T-cell (primary cell): ENCODE measurements at regions of chr12 and their contacts with region 1.

Region 1: DNA sequence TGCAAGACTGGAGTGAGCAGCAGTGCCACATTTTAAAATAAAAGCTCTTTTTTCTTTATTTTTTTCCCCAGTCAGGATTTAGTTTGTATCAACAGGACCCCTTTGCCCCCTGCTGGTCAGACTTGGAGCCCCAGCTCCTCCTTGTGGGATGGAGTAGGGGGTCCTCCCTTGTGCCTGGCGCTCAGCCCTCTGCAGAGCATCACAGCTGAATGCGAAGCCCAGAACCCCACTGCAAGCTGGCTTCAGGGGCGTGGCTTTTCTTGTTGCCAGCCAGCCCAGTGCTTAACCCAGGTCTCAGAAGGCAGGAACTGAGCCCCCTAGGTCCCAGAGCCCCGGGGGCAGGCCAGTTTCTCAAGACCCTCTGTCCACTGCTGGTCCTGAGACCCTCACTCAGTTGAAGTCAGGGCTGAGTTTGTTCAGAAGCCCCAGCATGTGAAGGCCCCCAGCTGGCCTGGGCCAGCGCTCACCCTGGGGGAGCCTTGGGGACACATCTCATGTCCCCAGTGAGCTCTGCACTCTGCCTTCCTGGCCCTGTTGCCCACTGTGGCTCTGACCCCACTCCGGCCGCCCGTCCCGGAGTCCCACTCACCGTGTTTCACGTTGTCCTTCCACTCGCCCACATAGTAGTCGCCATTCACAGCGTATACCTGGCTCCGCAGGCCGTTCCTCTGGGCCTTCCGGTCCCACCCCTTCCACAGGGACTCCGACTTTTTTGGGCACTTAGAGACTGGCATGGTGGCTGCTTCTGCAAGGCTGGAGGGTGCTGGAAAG is 519 bp downstream of the MORN3 start:
- DNase-seq: peak in 32 of 35 experiments; percentile 20 to 75 (median 57)
- ATAC-seq: no peak
- H3K4me3 ChIP-seq: no peak overlapping the region
- H3K4me3 Mint-ChIP-seq: no peak overlapping the region
- H3K27ac ChIP-seq: no peak overlapping the region
- H3K27ac Mint-ChIP-seq: peak overlapping the region; percentile 80 to 82
- H3K4me1 ChIP-seq: peaks cover 29 to 84% of the 10 kb centered on the region in 2 experiments
- H3K4me1 Mint-ChIP-seq: peaks cover 58 to 70% (median 61%) of the 10 kb centered on the region in 3 donors
- H3K27me3 ChIP-seq: no peaks in the 10 kb centered on the region
- H3K27me3 Mint-ChIP-seq: no peaks in the 10 kb centered on the region

Region 2: GRCh38 chr12:121530600-121531355 is 138.2 kb before region 1 on chr12:
- CTCF ChIA-PET with region 1: no interaction called
- POLR2A ChIA-PET with region 1: interaction called in 1 of 2 experiments, 11 read pairs
- DNase-seq: peak; percentile 47 to 86 (median 76)
- ATAC-seq: peak; percentile 62 to 85 (median 84)
- H3K4me3 ChIP-seq: no peak overlapping the region
- H3K4me3 Mint-ChIP-seq: peak overlapping the region; percentile 13 to 59 (median 35)
- H3K27ac ChIP-seq: peak overlapping the region; percentile 69
- H3K27ac Mint-ChIP-seq: peak overlapping the region; percentile 91 to 95
- H3K4me1 ChIP-seq: peaks cover 7 to 47% of the 10 kb centered on the region in 2 experiments
- H3K4me1 Mint-ChIP-seq: peaks cover 41 to 53% (median 51%) of the 10 kb centered on the region in 3 donors
- H3K27me3 ChIP-seq: no peaks in the 10 kb centered on the region
- H3K27me3 Mint-ChIP-seq: no peaks in the 10 kb centered on the region

Region 3: GRCh38 chr12:121579981-121580868 is 88.7 kb before region 1 on chr12:
- CTCF ChIA-PET with region 1: interaction called, 6 to 13 read pairs
- POLR2A ChIA-PET with region 1: interaction called, 3 to 5 read pairs
- DNase-seq: peak; percentile 59 to 88 (median 77)
- ATAC-seq: peak; percentile 65 to 73 (median 71)
- H3K4me3 ChIP-seq: peak overlapping the region; percentile 73 to 75
- H3K4me3 Mint-ChIP-seq: peak overlapping the region; percentile 96 to 98 (median 96)
- H3K27ac ChIP-seq: peak overlapping the region; percentile 89
- H3K27ac Mint-ChIP-seq: peak overlapping the region; percentile 98 to 99
- H3K4me1 ChIP-seq: peaks cover 17 to 52% of the 10 kb centered on the region in 2 experiments
- H3K4me1 Mint-ChIP-seq: peaks cover 42 to 52% (median 50%) of the 10 kb centered on the region in 3 donors
- H3K27me3 ChIP-seq: no peaks in the 10 kb centered on the region
- H3K27me3 Mint-ChIP-seq: no peaks in the 10 kb centered on the region

Region 4: DNA sequence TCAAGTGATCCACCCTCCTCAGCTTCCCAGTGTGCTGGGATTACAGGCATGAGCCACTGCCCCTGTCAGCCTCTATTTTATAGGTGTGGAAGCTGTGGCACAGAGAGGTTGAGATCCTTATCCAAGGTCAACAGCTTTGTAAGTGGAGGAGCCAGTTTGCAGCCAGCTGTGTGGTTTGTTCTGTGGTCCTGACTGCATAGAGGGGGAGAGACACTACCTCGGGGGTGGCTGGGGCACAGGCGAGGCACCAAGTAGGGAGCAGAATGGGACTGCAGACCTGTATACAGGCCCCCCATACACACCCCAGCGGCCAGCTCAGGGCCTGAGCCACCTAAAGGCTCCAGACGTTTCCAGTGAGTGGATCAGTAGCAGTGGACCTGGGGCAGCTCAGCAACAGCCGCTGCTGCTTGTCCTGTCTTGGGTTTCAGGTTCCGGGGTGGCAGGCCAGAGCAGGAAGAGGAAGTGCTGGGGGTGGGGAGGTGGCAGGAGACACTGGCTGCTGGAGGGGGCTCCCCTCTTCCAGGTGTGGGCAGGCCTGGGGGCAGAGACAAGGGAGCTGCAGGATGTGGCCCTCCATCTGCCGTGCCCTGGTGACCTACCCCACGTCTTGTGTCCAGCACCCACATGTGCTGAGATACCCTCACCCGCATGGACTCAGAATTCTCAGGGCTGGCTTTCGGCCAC is 31.6 kb before region 1 on chr12:
- CTCF ChIA-PET with region 1: interaction called, 3 to 8 read pairs
- POLR2A ChIA-PET with region 1: interaction called, 7 to 11 read pairs
- DNase-seq: peak in 34 of 35 experiments; percentile 18 to 68 (median 46)
- ATAC-seq: peak; percentile 76 to 91 (median 84)
- H3K4me3 ChIP-seq: peak overlapping the region; percentile 29 to 36
- H3K4me3 Mint-ChIP-seq: peak overlapping the region; percentile 53 to 79 (median 62)
- H3K27ac ChIP-seq: peak overlapping the region; percentile 84
- H3K27ac Mint-ChIP-seq: peak overlapping the region; percentile 91 to 96
- H3K4me1 ChIP-seq: peaks cover 30 to 76% of the 10 kb centered on the region in 2 experiments
- H3K4me1 Mint-ChIP-seq: peaks cover 60 to 73% (median 62%) of the 10 kb centered on the region in 3 donors
- H3K27me3 ChIP-seq: no peaks in the 10 kb centered on the region
- H3K27me3 Mint-ChIP-seq: no peaks in the 10 kb centered on the region

Region 5: DNA sequence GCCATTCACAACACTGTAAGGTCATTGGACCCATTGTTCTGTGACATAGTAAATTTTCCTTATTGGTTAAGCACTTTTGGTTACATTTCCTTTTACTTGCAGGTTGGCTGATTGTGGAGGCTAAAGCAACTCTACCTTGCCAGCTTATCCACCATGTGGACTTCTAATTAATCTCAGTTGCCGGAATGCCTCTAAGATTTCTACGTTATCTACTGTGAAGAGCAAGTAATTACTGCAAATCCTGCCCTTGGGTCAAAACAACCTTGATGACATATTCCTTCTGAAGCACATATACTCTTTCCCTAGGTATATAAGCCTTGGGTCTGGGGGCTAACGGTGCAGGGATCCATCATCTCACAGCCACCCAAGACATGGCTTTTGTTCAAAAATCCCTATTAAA is 20.0 kb after region 1 on chr12:
- CTCF ChIA-PET with region 1: interaction called in 1 of 2 experiments, 12 read pairs
- POLR2A ChIA-PET with region 1: interaction called in 1 of 2 experiments, 16 read pairs
- DNase-seq: no peak
- ATAC-seq: no peak
- H3K4me3 ChIP-seq: no peak overlapping the region
- H3K4me3 Mint-ChIP-seq: no peak overlapping the region
- H3K27ac ChIP-seq: no peak overlapping the region
- H3K27ac Mint-ChIP-seq: peak overlapping the region in 1 of 2 donors; percentile 28
- H3K4me1 ChIP-seq: peaks cover 4 to 16% of the 10 kb centered on the region in 2 experiments
- H3K4me1 Mint-ChIP-seq: peaks cover 7 to 12% (median 9%) of the 10 kb centered on the region in 3 donors
- H3K27me3 ChIP-seq: peaks cover 0 to 2% of the 10 kb centered on the region in 2 experiments
- H3K27me3 Mint-ChIP-seq: no peaks in the 10 kb centered on the region

Region 6: DNA sequence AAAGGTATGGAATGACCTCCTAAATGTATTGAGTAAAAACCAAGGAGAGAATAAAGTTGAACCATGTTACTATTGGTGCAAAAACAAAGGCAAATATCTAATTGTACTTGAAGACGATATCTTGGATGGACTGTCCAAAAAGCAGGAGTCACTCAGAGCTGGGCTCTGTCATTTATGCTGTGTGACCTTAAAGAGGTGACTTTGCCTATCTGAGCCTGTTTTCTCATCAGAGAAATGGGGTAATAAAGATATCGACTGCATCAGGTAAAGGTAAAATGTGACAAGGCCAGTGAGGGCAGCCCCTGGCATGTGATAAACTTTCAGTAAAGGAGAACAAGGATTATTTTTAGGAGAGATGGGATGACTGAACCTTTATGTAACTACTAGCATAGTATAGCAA is 1299.2 kb after region 1 on chr12:
- CTCF ChIA-PET with region 1: no interaction called
- POLR2A ChIA-PET with region 1: interaction called in 1 of 2 experiments, 10 read pairs
- DNase-seq: no peak
- ATAC-seq: no peak
- H3K4me3 ChIP-seq: no peak overlapping the region
- H3K4me3 Mint-ChIP-seq: no peak overlapping the region
- H3K27ac ChIP-seq: no peak overlapping the region
- H3K27ac Mint-ChIP-seq: peak overlapping the region; percentile 21 to 75
- H3K4me1 ChIP-seq: peaks cover 0 to 21% of the 10 kb centered on the region in 2 experiments
- H3K4me1 Mint-ChIP-seq: peaks cover 4 to 13% (median 12%) of the 10 kb centered on the region in 3 donors
- H3K27me3 ChIP-seq: no peaks in the 10 kb centered on the region
- H3K27me3 Mint-ChIP-seq: no peaks in the 10 kb centered on the region